Colonic mucosa (tissue), 4 donors: ENCODE measurements at regions of chr4 and their contacts with region 1.

Region 1: GRCh38 chr4:172596206-172596605 is 572.4 kb upstream of the GALNT7 start:
- DNase-seq: no peak
- H3K4me3 ChIP-seq: no peak overlapping the region
- H3K27ac ChIP-seq: no peak overlapping the region
- H3K4me1 ChIP-seq: no peaks in the 10 kb centered on the region
- H3K27me3 ChIP-seq: no peaks in the 10 kb centered on the region
- CTCF ChIP-seq: peak; percentile 32

Region 2: DNA sequence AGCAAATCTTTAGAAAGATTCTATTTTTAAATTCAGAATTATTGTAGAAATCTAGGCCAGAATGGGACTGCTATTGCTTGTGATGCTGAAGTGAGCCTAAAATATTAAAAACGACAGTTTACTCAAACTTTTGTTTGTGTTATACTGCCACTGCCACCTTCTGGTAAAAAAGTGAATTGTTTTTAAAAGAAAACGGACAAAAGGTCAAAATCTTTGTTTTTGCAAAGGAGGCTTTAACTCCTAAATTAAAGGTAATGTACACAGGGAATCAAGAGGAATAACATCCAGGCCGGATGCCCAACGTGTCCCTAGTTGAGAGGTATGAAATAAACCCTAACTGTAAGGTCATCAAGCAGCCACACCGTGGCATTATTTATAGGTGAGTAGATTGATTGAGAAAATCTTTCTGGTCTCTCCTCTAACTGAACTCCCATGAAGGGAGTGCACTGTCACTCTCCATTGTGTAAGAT is 234.1 kb after region 1 on chr4:
- intact Hi-C with region 1: loop called (anchors 5 kb)
- DNase-seq: no peak
- H3K4me3 ChIP-seq: no peak overlapping the region
- H3K27ac ChIP-seq: no peak overlapping the region
- H3K4me1 ChIP-seq: no peaks in the 10 kb centered on the region
- H3K27me3 ChIP-seq: no peaks in the 10 kb centered on the region
- CTCF ChIP-seq: peak; percentile 48